ENCODE measurements at regions of chr6 and their contacts with region 1.

Region 1: GRCh38 chr6:88982720-88983119 is 19.3 kb upstream of the RNGTT start:
- DNase-seq: no peak
- H3K4me3 ChIP-seq: no peak overlapping the region
- H3K27ac ChIP-seq: peak overlapping the region in 1 of 4 donors; percentile 4
- H3K4me1 ChIP-seq: peaks cover 0 to 9% (median 8%) of the 10 kb centered on the region in 4 donors
- H3K27me3 ChIP-seq: no peaks in the 10 kb centered on the region
- CTCF ChIP-seq: peak; percentile 73 to 84 (median 77)
- EP300 ChIP-seq: no peak
- POLR2A ChIP-seq: no peak

Region 2: GRCh38 chr6:89035252-89036106 is 52.8 kb after region 1 on chr6:
- intact Hi-C with region 1: loop called (anchors 5 kb)
- DNase-seq: peak; percentile 97
- H3K4me3 ChIP-seq: peak overlapping the region; percentile 3 to 43 (median 22)
- H3K27ac ChIP-seq: peak overlapping the region; percentile 85 to 94 (median 90)
- H3K4me1 ChIP-seq: peaks cover 32 to 48% (median 39%) of the 10 kb centered on the region in 4 donors
- H3K27me3 ChIP-seq: no peaks in the 10 kb centered on the region
- CTCF ChIP-seq: peak in 1 of 3 experiments; percentile 9
- EP300 ChIP-seq: peak; percentile 97
- POLR2A ChIP-seq: peak; percentile 70

Region 3: DNA sequence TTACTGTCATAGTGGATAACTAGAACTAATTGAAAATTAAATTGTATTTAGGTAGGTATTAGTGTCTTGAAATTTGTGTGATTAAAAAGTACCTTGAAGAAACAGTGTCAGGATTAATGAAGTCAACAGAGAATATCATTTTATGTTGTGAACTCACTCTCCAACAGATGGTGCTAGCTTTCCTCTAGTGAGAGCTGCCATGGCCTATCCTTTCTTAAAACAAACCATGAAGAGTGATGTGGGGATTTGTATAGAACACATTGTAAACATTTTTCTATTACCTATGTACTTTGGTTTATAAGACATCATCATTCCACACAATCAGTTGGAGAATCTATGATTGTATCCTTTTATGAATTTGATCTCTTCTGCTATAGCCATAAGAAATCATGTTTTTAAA is 139.9 kb after region 1 on chr6:
- intact Hi-C with region 1: loop called (anchors 2 kb)
- DNase-seq: no peak
- H3K4me3 ChIP-seq: no peak overlapping the region
- H3K27ac ChIP-seq: no peak overlapping the region
- H3K4me1 ChIP-seq: peaks cover 0 to 11% (median 7%) of the 10 kb centered on the region in 4 donors
- H3K27me3 ChIP-seq: no peaks in the 10 kb centered on the region
- CTCF ChIP-seq: peak; percentile 53 to 59 (median 55)
- EP300 ChIP-seq: no peak
- POLR2A ChIP-seq: no peak

Region 4: DNA sequence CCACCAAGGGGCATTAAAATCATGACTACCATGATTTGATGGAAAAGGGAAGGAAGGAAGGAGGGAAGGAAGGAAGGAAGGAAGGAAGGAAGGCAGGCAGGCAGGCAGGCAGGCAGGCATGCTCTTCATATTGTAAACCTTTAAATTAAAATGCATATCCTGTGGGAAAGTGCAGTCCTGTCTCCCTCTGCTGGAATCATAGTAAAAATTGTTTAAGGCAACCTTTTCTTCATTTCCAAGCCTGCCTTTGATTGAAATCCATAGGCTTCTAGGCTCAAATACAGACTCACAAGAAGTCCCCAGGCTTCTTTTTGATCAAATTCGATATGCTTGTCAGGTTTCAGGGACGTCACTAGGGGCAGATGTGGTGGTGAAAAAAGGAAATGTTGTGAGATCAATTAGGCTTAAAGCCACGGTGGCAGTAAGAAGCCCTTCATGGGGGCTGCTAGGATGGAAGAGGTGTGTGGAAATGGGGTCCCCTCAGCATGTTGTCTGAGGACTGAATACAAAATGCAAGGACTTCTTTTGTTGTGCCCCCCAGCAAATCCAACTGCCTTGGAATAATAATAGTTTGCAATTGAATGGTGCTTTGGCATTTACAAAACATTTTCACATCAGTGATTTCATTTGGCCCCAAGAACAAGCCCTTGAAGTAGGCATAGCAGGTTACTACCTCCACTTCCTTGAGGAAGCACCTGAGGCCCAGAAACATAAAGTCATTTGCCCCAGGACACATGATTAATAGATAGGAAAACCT is 260.0 kb after region 1 on chr6:
- intact Hi-C with region 1: loop called (anchors 2 kb)
- DNase-seq: peak; percentile 66
- H3K4me3 ChIP-seq: no peak overlapping the region
- H3K27ac ChIP-seq: no peak overlapping the region
- H3K4me1 ChIP-seq: peaks cover 0 to 10% (median 3%) of the 10 kb centered on the region in 4 donors
- H3K27me3 ChIP-seq: no peaks in the 10 kb centered on the region
- CTCF ChIP-seq: peak; percentile 50 to 61 (median 55)
- EP300 ChIP-seq: no peak
- POLR2A ChIP-seq: no peak

Measured in esophagus muscularis mucosa (tissue), 4 donors.